Dorsolateral prefrontal cortex (tissue), 120 donors: ENCODE measurements at regions of chr18 and their contacts with region 1.

Region 1: GRCh38 chr18:9808295-9809241 is 77.2 kb upstream of the TXNDC2 start:
- DNase-seq: peak in 4 of 10 donors; percentile 22 to 68 (median 63)
- H3K4me3 ChIP-seq: peak overlapping the region in 35 of 59 donors; percentile 0 to 49 (median 22)
- H3K27ac ChIP-seq: peak overlapping the region in 58 of 59 donors; percentile 46 to 93 (median 80)
- H3K27me3 ChIP-seq: no peaks in the 10 kb centered on the region
- CTCF ChIP-seq: peak in 3 of 56 donors; percentile 8 to 40 (median 13)

Region 2: GRCh38 chr18:9428301-9428706 is 380.3 kb before region 1 on chr18:
- intact Hi-C with region 1: no loop called
- DNase-seq: no peak
- H3K4me3 ChIP-seq: no peak overlapping the region
- H3K27ac ChIP-seq: peak overlapping the region in 14 of 59 donors; percentile 2 to 86 (median 42)
- H3K27me3 ChIP-seq: no peaks in the 10 kb centered on the region
- CTCF ChIP-seq: no peak

Region 3: GRCh38 chr18:9951022-9951859 is 142.7 kb after region 1 on chr18:
- intact Hi-C with region 1: loop called in 1 of 2 experiments (anchors 10 kb)
- DNase-seq: peak in 2 of 10 donors; percentile 62 to 66
- H3K4me3 ChIP-seq: no peak overlapping the region
- H3K27ac ChIP-seq: peak overlapping the region in 24 of 59 donors; percentile 0 to 65 (median 20)
- H3K27me3 ChIP-seq: no peaks in the 10 kb centered on the region
- CTCF ChIP-seq: peak; percentile 28 to 86 (median 68)